ENCODE measurements at regions of chr1 and their contacts with region 1.

Region 1: DNA sequence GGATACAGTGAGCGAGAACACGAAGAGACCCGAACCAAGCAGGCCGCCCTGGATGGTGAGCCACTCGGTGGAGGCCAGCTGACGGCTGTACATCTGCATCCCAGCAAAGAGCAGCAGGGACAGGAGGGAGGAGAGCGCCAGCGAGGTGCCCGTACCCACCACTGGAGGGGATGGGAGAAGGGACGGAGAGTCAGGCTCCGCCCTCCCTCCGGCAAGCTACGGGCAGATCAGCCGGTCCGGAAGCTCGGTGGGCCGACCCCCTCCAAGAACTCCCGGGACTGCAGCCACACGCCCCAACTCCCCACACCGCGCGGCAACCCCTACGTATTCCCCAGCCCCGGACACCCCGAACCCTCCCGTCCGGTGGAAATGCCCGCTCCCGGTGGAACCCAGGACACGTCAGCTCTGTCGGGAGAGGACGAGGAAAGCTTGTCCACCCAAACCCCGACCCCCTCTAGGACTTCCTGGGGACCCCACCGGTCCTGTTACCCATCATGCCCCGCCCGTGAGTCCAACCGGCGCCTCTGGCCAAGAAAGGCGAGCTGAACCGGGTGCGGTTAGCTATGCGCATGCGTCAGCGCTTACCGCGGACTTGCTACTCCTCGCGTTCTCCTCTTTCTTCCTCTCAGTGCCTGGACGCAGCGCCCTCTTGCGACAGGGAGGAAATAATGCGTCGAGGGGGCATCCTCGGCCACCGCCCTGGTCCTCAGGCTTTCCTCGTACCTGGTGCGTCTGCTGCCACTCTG is at the start of gene KRTCAP2:
- DNase-seq: peak; percentile 98
- H3K4me3 Mint-ChIP-seq: peak within 1 kb of the TSS; percentile 93
- H3K27ac Mint-ChIP-seq: peak within 1 kb of the TSS; percentile 96
- H3K4me1 Mint-ChIP-seq: peaks cover 48% of the 10 kb centered on the region
- H3K27me3 Mint-ChIP-seq: no peaks in the 10 kb centered on the region
- total RNA-seq, gene KRTCAP2: 138 to 146 TPM

Region 2: DNA sequence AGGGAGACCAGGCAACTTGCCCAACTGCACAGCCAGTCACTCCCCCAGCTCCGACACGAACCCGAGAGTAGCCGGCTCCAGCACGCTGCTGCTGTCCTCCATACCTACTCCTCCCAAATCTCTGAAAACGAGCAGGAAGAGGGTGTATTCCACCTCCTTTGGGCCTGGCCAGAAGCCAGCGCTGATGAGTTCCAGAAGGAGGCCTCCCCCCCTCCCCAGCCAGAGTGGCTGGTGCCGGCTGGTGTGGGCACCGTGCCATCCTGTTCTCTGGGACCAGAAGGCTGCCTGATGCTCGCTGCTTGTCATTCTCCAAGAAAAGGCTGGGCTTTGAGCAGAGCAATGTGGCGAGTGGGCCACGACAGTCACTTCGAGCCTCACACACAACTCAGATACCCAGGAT is 325.0 kb before region 1 on chr1:
- CTCF ChIA-PET with region 1: no interaction called
- POLR2A ChIA-PET with region 1: no interaction called
- intact Hi-C with region 1: no loop called
- DNase-seq: no peak
- H3K4me3 Mint-ChIP-seq: no peak overlapping the region
- H3K27ac Mint-ChIP-seq: no peak overlapping the region
- H3K4me1 Mint-ChIP-seq: peaks cover 16% of the 10 kb centered on the region
- H3K27me3 Mint-ChIP-seq: peaks cover 10% of the 10 kb centered on the region

Region 3: GRCh38 chr1:155135415-155136028 is 37.4 kb before region 1 on chr1 and contains the start of gene SLC50A1:
- CTCF ChIA-PET with region 1: interaction called, 21 read pairs
- POLR2A ChIA-PET with region 1: interaction called, 3 read pairs
- intact Hi-C with region 1: loop called (anchors 1 kb)
- DNase-seq: peak; percentile 96
- H3K4me3 Mint-ChIP-seq: peak within 1 kb of the TSS; percentile 91
- H3K27ac Mint-ChIP-seq: peak within 1 kb of the TSS; percentile 94
- H3K4me1 Mint-ChIP-seq: peaks cover 35% of the 10 kb centered on the region
- H3K27me3 Mint-ChIP-seq: no peaks in the 10 kb centered on the region
- total RNA-seq, gene SLC50A1: 60.1 TPM

Region 4: DNA sequence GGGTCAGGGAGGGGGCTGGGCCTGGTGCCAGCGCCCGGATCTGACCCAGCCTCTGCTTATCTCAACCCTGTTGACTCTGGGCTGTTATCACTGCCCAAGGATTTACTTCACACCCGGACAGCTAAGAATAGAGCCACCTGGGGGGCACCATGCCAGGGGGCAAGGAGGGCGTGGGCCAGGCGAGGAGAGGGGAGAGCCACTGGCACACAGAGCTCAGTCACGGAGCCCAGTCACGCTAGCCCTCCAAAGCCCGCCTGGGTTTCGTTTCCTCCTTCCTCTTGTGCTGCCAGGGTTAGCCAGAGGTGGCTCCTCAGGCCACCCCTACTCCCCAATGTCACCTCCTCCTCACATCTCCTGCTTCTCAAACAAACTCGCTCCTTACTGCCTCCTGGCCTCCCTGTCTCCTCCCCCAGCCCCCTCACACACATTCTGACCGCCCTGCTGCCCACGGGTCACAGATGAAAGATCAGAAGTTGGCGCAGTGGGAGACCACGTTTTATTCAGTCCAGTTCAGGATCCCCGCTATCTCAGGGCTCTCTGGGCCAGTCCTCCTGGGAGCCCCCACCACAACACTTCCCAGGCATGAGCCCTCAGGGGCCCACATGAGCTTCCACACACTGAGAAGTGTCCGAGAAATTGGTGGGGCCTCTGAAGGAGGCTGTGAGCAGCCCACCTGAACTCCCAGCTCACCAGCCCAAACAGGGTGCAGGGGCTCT is 12.6 kb after region 1 on chr1:
- CTCF ChIA-PET with region 1: interaction called, 15 read pairs
- POLR2A ChIA-PET with region 1: interaction called, 14 read pairs
- intact Hi-C with region 1: no loop called
- DNase-seq: no peak
- H3K4me3 Mint-ChIP-seq: no peak overlapping the region
- H3K27ac Mint-ChIP-seq: no peak overlapping the region
- H3K4me1 Mint-ChIP-seq: peaks cover 3% of the 10 kb centered on the region
- H3K27me3 Mint-ChIP-seq: no peaks in the 10 kb centered on the region

Region 5: GRCh38 chr1:155208541-155209311 is 35.8 kb after region 1 on chr1 and contains the start of gene MTX1:
- CTCF ChIA-PET with region 1: interaction called, 69 read pairs
- POLR2A ChIA-PET with region 1: interaction called, 6 read pairs
- intact Hi-C with region 1: loop called (anchors 5 kb)
- DNase-seq: peak; percentile 92
- H3K4me3 Mint-ChIP-seq: peak within 1 kb of the TSS; percentile 83
- H3K27ac Mint-ChIP-seq: peak within 1 kb of the TSS; percentile 89
- H3K4me1 Mint-ChIP-seq: peaks cover 29% of the 10 kb centered on the region
- H3K27me3 Mint-ChIP-seq: no peaks in the 10 kb centered on the region
- total RNA-seq, gene MTX1: 45.2 to 47.9 TPM

Region 6: DNA sequence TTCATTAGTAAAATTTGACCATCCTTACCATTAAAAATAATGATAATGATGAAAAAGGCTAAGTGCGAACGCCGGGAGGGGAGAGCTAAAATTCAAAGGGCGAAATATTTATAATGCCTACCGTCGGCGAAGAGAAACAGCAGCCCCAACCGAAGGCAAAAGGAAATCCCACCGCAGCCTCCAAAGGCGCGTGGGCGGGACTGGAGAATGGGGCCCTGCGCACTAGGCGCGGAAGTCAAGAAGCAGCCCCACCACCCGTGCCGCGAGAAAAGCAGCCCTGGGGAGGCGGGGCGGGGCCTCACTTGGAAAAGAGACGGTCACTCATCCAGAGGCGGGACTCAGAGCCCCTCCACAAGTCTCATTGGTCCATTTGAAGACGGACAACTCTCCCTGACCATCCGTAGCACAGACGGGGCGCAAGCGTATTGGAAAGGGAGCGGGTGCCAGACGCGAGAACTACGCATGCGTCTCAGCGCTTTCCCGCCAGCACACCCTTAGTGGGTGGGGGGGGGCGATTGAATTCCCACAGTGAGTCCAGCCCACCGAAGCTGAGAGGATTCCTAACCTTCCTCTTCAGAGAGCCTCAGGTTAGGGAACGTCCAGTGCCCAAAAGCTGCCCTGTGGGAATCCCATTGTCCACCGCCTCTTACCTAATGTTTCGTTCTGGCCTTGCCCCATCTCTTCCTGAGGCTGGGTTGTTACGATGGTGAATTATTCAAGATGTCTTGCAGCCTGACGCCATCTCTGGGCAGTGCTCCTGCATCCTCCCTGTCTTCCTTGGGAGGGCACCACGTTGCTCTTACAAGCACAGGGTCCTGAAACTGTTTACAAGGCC is 54.6 kb after region 1 on chr1:
- CTCF ChIA-PET with region 1: interaction called, 16 read pairs
- POLR2A ChIA-PET with region 1: interaction called, 12 read pairs
- intact Hi-C with region 1: loop called (anchors 1 kb)
- DNase-seq: peak; percentile 100
- H3K4me3 Mint-ChIP-seq: peak overlapping the region; percentile 89
- H3K27ac Mint-ChIP-seq: peak overlapping the region; percentile 98
- H3K4me1 Mint-ChIP-seq: peaks cover 26% of the 10 kb centered on the region
- H3K27me3 Mint-ChIP-seq: no peaks in the 10 kb centered on the region

Region 7: GRCh38 chr1:155316922-155317321 is 144.0 kb after region 1 on chr1:
- CTCF ChIA-PET with region 1: no interaction called
- POLR2A ChIA-PET with region 1: no interaction called
- intact Hi-C with region 1: no loop called
- DNase-seq: no peak
- H3K4me3 Mint-ChIP-seq: no peak overlapping the region
- H3K27ac Mint-ChIP-seq: no peak overlapping the region
- H3K4me1 Mint-ChIP-seq: peaks cover 31% of the 10 kb centered on the region
- H3K27me3 Mint-ChIP-seq: no peaks in the 10 kb centered on the region

Region 8: GRCh38 chr1:155466996-155467395 is 294.1 kb after region 1 on chr1:
- CTCF ChIA-PET with region 1: no interaction called
- POLR2A ChIA-PET with region 1: no interaction called
- intact Hi-C with region 1: no loop called
- DNase-seq: no peak
- H3K4me3 Mint-ChIP-seq: no peak overlapping the region
- H3K27ac Mint-ChIP-seq: peak overlapping the region; percentile 36
- H3K4me1 Mint-ChIP-seq: peaks cover 49% of the 10 kb centered on the region
- H3K27me3 Mint-ChIP-seq: no peaks in the 10 kb centered on the region